CD4-positive, alpha-beta memory T cell (primary cell): ENCODE measurements at regions of chr13 and their contacts with region 1.

Region 1: DNA sequence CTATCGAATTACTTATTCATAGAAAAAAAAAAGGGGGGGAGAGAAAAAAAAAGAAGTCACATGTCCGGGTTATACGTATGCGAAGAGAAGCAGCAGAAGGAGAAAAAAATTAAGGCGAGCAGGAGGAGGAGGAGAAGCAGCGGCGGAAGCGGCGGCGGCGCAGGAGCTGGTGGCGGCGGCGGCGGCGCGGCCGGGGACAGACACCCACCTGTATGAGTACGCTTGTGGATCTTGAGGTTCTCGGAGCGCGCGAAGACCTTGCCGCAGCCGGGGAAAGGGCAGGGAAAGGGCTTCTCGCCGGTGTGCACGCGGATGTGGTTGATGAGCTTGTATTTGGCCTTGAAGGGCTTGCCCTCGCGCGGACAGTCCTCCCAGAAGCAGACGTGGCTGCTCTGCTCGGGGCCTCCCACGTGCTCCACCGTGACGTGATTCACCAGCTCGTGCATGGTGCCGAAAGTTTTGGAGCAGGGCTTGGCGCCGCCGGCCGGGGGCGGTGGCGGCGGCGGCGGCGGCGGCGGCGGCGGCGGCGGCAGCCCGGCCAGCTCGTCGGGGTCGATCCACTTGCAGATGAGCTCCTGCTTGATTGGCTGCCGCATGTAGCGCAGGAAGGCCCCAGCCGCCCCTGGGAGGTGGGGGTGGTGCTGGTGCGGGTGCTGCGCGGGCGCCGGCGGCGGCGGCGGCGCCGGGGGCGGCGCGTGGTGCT is 1.5 kb downstream of the ZIC5 start:
- DNase-seq: peak in 3 of 5 donors; percentile 45 to 64 (median 54)
- H3K4me3 ChIP-seq: peak overlapping the region in 1 of 2 donors; percentile 38
- H3K4me3 Mint-ChIP-seq: peak overlapping the region; percentile 73 to 89 (median 84)
- H3K27ac ChIP-seq: no peak overlapping the region
- H3K27ac Mint-ChIP-seq: peak overlapping the region in 5 of 7 donors; percentile 8 to 93 (median 89)
- H3K4me1 ChIP-seq: peaks cover 32% of the 10 kb centered on the region
- H3K4me1 Mint-ChIP-seq: peaks cover 10 to 44% (median 20%) of the 10 kb centered on the region in 4 donors
- H3K27me3 ChIP-seq: peaks cover 72% of the 10 kb centered on the region
- H3K27me3 Mint-ChIP-seq: peaks cover 64 to 68% of the 10 kb centered on the region in 2 donors

Region 2: DNA sequence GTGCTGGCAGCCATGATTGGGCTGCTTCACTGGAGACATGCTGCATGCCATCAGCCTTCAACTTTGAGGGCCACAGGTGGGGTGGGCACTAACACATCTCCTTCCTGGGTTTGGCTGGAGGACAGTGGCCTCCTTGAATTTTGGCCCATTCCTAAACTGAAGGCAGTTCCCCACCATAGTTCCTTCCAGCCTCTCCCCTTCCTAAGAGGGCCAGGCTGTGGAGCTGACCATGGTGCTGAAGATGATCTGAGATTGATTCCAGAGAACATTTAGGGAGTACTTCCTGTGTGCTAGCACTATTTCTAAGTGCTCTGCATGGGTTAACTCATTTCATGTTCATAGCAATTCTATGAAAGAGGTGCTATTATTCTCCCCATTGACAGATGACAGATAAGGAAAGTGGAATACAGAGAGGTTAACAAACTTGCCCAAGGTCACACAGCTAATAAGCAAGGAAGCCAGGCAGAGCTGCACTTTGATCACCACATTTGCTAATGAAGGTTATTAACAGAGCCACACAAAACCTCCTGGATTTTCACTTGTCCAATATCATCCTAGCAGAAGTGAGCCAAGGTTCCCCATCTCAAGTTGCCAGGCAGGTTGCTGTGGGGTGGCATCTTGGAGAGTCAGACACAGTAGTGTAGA is 173.8 kb before region 1 on chr13:
- CTCF ChIA-PET with region 1: no interaction called
- POLR2A ChIA-PET with region 1: no interaction called
- intact Hi-C with region 1: no loop called
- DNase-seq: no peak
- H3K4me3 ChIP-seq: no peak overlapping the region
- H3K4me3 Mint-ChIP-seq: no peak overlapping the region
- H3K27ac ChIP-seq: no peak overlapping the region
- H3K27ac Mint-ChIP-seq: no peak overlapping the region
- H3K4me1 ChIP-seq: no peaks in the 10 kb centered on the region
- H3K4me1 Mint-ChIP-seq: no peaks in the 10 kb centered on the region
- H3K27me3 ChIP-seq: no peaks in the 10 kb centered on the region
- H3K27me3 Mint-ChIP-seq: no peaks in the 10 kb centered on the region

Region 3: DNA sequence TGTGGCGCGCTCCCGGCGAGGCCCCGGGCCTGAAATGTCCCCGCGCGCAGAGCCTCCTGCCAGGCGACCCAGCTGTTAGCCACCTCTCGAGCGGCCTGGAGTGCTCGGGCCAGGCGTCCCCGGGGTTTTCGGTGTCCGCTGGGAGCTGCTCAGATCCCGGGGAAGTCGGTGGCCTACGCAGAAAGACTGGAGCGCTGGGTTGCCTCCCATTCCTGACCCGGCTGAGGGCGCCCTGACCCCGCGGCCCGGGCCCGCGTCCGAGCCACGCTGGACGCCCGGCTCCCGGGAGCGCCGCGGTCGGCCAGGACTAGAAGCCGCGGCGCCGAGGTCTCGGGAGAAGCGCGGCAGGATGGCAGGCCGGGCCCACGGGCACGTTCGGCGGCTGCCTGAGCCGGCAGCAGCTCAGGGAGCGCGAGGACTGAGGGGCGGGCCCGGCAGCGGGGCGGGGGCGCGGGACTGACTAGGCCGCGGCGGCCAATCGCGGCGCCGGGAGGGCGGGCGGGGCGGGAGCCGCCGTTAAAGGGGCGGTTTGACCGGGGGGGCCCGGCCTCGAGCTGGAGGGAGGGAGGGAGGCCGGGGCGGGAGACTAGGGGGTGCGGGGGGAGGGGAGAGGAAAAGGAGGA is 10.2 kb after region 1 on chr13:
- CTCF ChIA-PET with region 1: interaction called, 3 read pairs
- POLR2A ChIA-PET with region 1: interaction called, 11 read pairs
- intact Hi-C with region 1: loop called (anchors 1 kb)
- DNase-seq: peak in 4 of 5 donors; percentile 44 to 60 (median 55)
- H3K4me3 ChIP-seq: no peak overlapping the region
- H3K4me3 Mint-ChIP-seq: no peak overlapping the region
- H3K27ac ChIP-seq: no peak overlapping the region
- H3K27ac Mint-ChIP-seq: peak overlapping the region in 1 of 7 donors; percentile 90
- H3K4me1 ChIP-seq: peaks cover 37% of the 10 kb centered on the region
- H3K4me1 Mint-ChIP-seq: peaks cover 4 to 35% (median 16%) of the 10 kb centered on the region in 4 donors
- H3K27me3 ChIP-seq: peaks cover 78% of the 10 kb centered on the region
- H3K27me3 Mint-ChIP-seq: peaks cover 56 to 58% of the 10 kb centered on the region in 2 donors

Region 4: GRCh38 chr13:99985241-99985874 is 15.3 kb after region 1 on chr13:
- CTCF ChIA-PET with region 1: interaction called, 3 read pairs
- POLR2A ChIA-PET with region 1: interaction called, 11 read pairs
- intact Hi-C with region 1: loop called (anchors 1 kb)
- DNase-seq: peak in 1 of 5 donors; percentile 25
- H3K4me3 ChIP-seq: no peak overlapping the region
- H3K4me3 Mint-ChIP-seq: no peak overlapping the region
- H3K27ac ChIP-seq: no peak overlapping the region
- H3K27ac Mint-ChIP-seq: peak overlapping the region in 4 of 7 donors; percentile 47 to 96 (median 73)
- H3K4me1 ChIP-seq: peaks cover 27% of the 10 kb centered on the region
- H3K4me1 Mint-ChIP-seq: peaks cover 11 to 43% (median 26%) of the 10 kb centered on the region in 4 donors
- H3K27me3 ChIP-seq: peaks cover 71% of the 10 kb centered on the region
- H3K27me3 Mint-ChIP-seq: peaks cover 50 to 53% of the 10 kb centered on the region in 2 donors